A673 (cell line): ENCODE measurements at regions of chr4 and their contacts with region 1.

Region 1: GRCh38 chr4:68271851-68272756 is 26.6 kb upstream of the TMPRSS11B start:
- DNase-seq: peak; percentile 38
- H3K4me3 ChIP-seq: no peak overlapping the region
- H3K27ac ChIP-seq: no peak overlapping the region
- H3K4me1 ChIP-seq: no peaks in the 10 kb centered on the region
- H3K27me3 ChIP-seq: no peaks in the 10 kb centered on the region
- CTCF ChIP-seq: peak; percentile 49

Region 2: DNA sequence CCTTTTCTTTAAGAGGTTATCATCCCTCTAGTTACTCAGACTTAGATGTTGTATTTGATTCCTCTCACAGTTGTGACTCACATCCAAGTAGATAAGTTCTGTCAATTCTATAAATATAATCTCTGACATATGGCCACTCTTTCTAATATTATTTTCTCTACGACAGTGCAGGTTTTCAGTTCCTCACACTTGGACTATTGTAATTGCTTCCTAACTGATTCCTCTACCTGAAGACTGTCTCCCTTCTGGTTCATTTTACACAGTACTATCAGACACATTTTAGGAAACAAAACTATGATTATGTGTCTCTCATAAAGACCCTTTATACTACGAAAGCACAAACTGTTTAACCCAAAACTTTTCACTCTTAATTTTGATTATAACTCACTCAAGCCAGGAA is 486.6 kb before region 1 on chr4:
- CTCF ChIA-PET with region 1: no interaction called
- POLR2A ChIA-PET with region 1: no interaction called
- intact Hi-C with region 1: no loop called
- DNase-seq: no peak
- H3K4me3 ChIP-seq: no peak overlapping the region
- H3K27ac ChIP-seq: no peak overlapping the region
- H3K4me1 ChIP-seq: no peaks in the 10 kb centered on the region
- H3K27me3 ChIP-seq: no peaks in the 10 kb centered on the region
- CTCF ChIP-seq: no peak

Region 3: DNA sequence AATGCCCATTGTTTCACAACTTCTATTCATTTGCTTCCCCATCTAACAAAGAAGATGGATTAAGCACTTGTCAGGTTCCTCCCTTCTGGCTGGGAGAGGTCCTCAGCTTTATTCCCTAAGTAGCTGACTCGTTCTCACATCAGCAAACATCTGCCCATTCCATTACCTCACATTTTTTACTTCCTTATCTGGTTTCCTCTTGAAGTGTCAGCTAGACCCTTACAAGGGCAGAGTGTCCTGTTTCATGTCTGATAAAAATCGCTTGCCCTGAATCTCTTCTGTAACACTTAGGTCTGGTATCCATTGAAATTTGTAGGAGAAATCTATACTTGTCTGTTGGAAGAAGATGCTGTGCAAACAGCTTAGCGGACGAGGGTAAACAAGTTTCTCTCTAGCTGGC is 343.5 kb before region 1 on chr4:
- CTCF ChIA-PET with region 1: no interaction called
- POLR2A ChIA-PET with region 1: no interaction called
- intact Hi-C with region 1: no loop called
- DNase-seq: no peak
- H3K4me3 ChIP-seq: no peak overlapping the region
- H3K27ac ChIP-seq: no peak overlapping the region
- H3K4me1 ChIP-seq: no peaks in the 10 kb centered on the region
- H3K27me3 ChIP-seq: no peaks in the 10 kb centered on the region
- CTCF ChIP-seq: no peak

Region 4: DNA sequence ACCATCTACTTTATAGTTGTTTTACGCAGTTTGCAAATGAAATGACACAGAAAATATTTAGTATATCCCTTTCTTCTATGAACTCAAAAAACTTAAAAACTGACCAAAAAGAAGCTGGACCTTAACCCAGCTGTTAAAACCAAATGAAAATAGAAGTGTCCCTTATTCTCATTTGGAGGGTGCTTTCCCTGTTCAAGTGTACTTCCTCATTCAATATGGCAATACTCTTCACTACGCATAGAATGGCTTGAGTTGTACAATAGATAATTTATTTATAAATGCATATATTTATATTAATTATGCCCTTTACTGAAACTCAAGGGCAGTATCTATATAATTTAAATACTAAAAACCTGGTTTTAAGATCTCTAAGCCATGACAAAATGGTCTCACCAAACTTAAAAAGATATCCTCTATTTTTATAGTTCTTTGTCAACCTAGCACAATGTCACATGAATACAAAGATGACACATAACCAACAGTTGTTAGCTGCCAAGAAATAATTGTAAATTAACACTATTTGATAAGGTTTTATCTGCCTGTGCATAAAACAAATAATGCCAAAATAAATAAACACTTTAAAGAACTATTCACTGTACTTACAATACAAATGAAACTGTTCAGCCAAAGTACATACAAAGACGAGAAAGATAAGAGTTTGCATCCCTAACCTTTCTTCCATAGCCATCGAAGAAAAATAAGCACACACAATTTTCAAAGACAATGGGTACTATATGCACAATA is 52.6 kb after region 1 on chr4:
- CTCF ChIA-PET with region 1: no interaction called
- POLR2A ChIA-PET with region 1: no interaction called
- intact Hi-C with region 1: no loop called
- DNase-seq: no peak
- H3K4me3 ChIP-seq: no peak overlapping the region
- H3K27ac ChIP-seq: no peak overlapping the region
- H3K4me1 ChIP-seq: no peaks in the 10 kb centered on the region
- H3K27me3 ChIP-seq: no peaks in the 10 kb centered on the region
- CTCF ChIP-seq: no peak

Region 5: DNA sequence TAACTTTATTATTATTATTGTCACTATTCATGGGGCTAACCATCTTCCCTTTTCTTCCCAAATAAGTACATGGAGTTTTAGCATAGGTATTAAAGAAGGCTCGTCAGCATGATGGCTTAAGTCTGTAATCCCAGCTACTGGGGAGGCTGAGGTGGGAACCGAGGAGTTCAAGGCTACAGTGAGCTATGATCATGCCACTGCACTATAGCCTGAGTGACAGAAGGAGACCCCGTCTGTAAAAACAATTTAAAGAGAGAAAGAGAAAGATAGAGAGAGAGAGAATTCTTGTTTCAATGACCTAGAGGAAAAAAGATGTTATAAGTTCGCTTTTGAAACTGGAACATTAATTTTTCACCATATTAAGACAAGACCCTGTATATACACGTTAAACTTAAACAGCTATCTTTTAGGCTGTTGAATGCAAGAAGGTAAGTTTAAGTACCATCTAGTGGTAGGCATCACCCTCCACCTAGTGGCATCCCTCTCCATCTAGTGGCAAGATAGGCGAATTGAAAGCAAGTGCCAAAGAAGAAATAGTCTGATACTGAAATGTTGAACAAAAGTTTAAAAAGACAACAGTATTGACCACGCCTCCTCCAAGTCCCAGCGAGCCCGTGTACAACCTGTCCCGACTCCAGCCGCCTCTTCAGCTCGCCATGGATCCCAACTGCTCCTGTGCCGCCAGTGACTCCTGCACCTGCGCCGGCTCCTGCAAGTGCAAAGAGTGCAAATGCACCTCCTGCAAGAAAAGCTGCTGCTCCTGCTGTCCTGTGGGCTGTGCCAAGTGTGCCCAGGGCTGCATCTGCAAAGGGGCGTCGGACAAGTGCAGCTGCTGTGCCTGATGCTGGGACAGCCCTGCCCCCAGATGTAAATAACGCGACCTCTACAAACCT is 103.8 kb after region 1 on chr4:
- CTCF ChIA-PET with region 1: interaction called, 3 read pairs
- POLR2A ChIA-PET with region 1: no interaction called
- intact Hi-C with region 1: loop called (anchors 2 kb)
- DNase-seq: peak; percentile 51
- H3K4me3 ChIP-seq: peak overlapping the region; percentile 21
- H3K27ac ChIP-seq: no peak overlapping the region
- H3K4me1 ChIP-seq: no peaks in the 10 kb centered on the region
- H3K27me3 ChIP-seq: no peaks in the 10 kb centered on the region
- CTCF ChIP-seq: peak; percentile 62

Region 6: DNA sequence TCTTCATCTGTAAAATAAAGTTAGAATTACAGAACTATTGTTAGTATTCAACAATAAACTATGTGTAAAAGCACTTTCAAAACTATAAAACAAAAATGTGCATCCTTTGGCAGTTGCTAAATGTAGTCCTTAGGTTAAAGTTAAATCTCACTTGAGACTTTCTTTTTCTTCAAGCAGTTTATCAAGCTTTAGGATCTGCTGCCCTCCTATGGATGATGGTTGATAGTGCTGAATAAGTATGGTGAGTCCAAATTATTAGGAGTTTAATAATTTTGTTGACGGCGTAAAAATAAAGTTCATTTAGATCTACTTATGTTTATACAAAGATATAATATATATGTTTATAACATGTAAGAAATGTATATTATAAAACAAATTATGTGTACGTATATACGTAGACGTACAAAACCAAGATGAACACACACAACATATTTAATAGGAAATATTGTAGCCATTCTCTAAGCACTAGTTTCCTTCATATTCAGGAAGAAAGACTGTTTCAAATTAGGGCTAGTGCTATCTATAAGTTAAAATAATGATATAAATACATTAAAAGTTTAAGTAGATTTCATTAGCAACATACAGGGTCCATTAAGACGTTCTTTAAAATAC is 1345.1 kb after region 1 on chr4:
- CTCF ChIA-PET with region 1: no interaction called
- POLR2A ChIA-PET with region 1: no interaction called
- intact Hi-C with region 1: loop called (anchors 10 kb)
- DNase-seq: peak; percentile 38
- H3K4me3 ChIP-seq: no peak overlapping the region
- H3K27ac ChIP-seq: no peak overlapping the region
- H3K4me1 ChIP-seq: no peaks in the 10 kb centered on the region
- H3K27me3 ChIP-seq: no peaks in the 10 kb centered on the region
- CTCF ChIP-seq: peak; percentile 52; the same call in 1 of the 2 replicates